ENCODE measurements at regions of chr11 and their contacts with region 1.

Region 1: GRCh38 chr11:47259178-47259977 is 1.6 kb downstream of the NR1H3 start:
- DNase-seq: peak in 1 of 2 experiments; percentile 85
- H3K4me3 ChIP-seq: no peak overlapping the region
- H3K27ac ChIP-seq: no peak overlapping the region
- H3K4me1 ChIP-seq: peaks cover 2 to 15% (median 9%) of the 10 kb centered on the region in 4 experiments
- H3K27me3 ChIP-seq: no peaks in the 10 kb centered on the region
- CTCF ChIP-seq: peak; percentile 70 to 80 (median 74)
- EP300 ChIP-seq: no peak
- POLR2A ChIP-seq: no peak
- RAD21 ChIP-seq: peak; percentile 72 to 79

Region 2: DNA sequence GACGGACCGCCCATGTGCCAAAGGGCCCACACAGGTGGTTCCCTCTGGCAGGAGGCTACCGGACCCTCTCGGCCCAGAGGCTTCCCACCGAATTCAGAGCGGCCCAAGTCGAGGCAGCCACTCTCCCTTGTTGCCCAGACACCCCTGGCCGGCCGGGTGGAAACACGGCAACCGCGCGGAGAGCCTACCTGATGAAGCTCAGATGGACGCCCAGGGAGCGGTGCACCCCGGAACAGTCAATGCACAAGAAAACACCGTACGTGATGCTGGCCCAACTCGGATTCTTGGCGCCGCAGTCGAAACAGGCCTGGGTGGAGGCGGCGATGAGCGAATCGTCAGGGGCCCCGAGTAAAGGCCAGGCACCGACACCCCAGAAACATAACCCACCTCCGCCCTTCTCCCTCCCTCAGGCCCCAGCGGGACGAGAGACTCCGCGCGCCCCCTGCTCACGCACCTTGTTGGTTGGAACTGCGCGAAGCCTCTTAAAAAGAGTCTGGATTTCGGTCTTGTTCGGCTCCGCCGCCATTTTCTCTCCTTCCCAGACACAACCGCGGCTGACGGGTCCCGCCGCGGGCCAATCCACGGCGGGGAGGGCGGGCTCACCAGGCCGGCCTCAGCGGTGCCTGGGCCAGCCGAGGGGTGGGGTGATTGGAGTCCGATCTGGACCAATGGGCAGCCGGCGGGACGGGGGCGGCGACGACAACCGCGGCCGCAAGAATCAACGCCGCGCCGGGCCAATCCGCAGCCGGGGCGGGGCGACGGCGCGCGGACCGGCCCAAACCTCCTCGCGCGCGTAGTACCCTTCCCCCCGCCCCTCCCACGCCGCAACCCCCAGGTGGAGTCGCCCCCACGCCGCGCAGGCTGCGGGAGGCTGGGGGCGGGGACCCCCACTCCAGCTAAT is 82.8 kb before region 1 on chr11 and contains the start of gene ARFGAP2:
- CTCF ChIA-PET with region 1: interaction called, 53 read pairs
- POLR2A ChIA-PET with region 1: interaction called, 35 read pairs
- DNase-seq: peak in 1 of 2 experiments; percentile 93
- H3K4me3 ChIP-seq: peak within 1 kb of the TSS; percentile 72 to 93 (median 90)
- H3K27ac ChIP-seq: peak within 1 kb of the TSS; percentile 93
- H3K4me1 ChIP-seq: peaks cover 0 to 8% (median 1%) of the 10 kb centered on the region in 4 experiments; a peak in 5 of 7 replicates
- H3K27me3 ChIP-seq: no peaks in the 10 kb centered on the region
- CTCF ChIP-seq: no peak
- EP300 ChIP-seq: 0 out of 3 replicates have a peak, but pooled peaks of 1 of the 2 experiments have one; percentile 16
- POLR2A ChIP-seq: peak in 1 of 2 experiments; percentile 78; a peak in 2 of 3 replicates
- RAD21 ChIP-seq: no peak
- total RNA-seq, gene ARFGAP2: 50.0 and 50.2 TPM in 2 replicates

Region 3: GRCh38 chr11:47213985-47214564 is 45.3 kb before region 1 on chr11:
- CTCF ChIA-PET with region 1: interaction called, 8 read pairs
- POLR2A ChIA-PET with region 1: interaction called, 13 read pairs
- DNase-seq: peak; percentile 69 to 88
- H3K4me3 ChIP-seq: peak overlapping the region; percentile 65 to 98 (median 75)
- H3K27ac ChIP-seq: peak overlapping the region; percentile 86
- H3K4me1 ChIP-seq: peaks cover 0 to 10% (median 8%) of the 10 kb centered on the region in 4 experiments; a peak in 6 of 7 replicates
- H3K27me3 ChIP-seq: no peaks in the 10 kb centered on the region
- CTCF ChIP-seq: no peak
- EP300 ChIP-seq: no peak
- POLR2A ChIP-seq: peak; percentile 75
- RAD21 ChIP-seq: no peak

Region 4: DNA sequence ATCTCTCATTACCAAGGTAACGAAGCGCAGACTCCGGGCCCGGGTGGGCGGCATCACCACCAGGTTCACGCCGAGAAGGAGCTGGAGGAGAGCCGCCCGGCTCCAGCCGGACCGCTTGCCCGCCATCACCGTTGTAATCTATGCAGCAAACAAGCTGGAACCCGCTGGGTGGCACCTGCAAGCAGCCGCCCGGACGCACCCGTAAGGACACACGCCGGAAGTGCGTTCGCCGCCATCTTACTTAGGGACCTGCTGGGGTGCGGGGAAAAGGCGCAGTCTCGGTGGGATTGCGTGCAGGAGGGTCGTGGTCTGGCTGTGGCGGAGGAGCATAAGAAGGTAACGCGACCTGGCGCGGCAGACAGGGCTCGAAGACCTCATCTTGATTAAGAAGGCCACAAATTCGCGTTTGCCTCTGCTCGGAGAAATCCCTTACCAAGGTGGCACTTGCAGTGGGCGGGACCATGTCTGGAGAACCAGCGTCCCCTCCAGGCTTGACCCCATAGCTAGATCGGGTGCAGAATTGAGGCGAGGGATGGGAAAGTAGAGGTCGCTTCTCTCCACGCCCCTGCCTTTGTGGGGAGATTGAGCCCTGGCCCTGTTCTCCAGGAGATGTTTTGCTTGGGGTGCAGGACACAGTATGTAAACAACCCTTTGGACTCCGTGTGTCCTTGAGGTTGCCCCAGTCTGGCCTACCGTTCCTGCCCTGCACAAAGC is 10.6 kb before region 1 on chr11 and contains the start of gene ACP2:
- CTCF ChIA-PET with region 1: interaction called, 127 read pairs
- POLR2A ChIA-PET with region 1: interaction called, 47 read pairs
- DNase-seq: peak in 1 of 2 experiments; percentile 93
- H3K4me3 ChIP-seq: peak within 1 kb of the TSS; percentile 42 to 97 (median 93)
- H3K27ac ChIP-seq: peak within 1 kb of the TSS; percentile 96
- H3K4me1 ChIP-seq: peaks cover 0 to 9% (median 0%) of the 10 kb centered on the region in 4 experiments; a peak in 4 of 7 replicates
- H3K27me3 ChIP-seq: no peaks in the 10 kb centered on the region
- CTCF ChIP-seq: peak; percentile 0 to 51 (median 42); a peak in 3 of 4 replicates
- EP300 ChIP-seq: peak in 1 of 2 experiments; percentile 76; a peak in 1 of 3 replicates
- POLR2A ChIP-seq: peak; percentile 61 to 96
- RAD21 ChIP-seq: peak; percentile 8 to 12; a peak in 2 of 4 replicates
- total RNA-seq, gene ACP2: 17.8 and 18.9 TPM in 2 replicates

Region 5: GRCh38 chr11:47305734-47306483 is 46.5 kb after region 1 on chr11:
- CTCF ChIA-PET with region 1: interaction called, 10 read pairs
- POLR2A ChIA-PET with region 1: interaction called, 3 read pairs
- DNase-seq: no peak
- H3K4me3 ChIP-seq: no peak overlapping the region
- H3K27ac ChIP-seq: no peak overlapping the region
- H3K4me1 ChIP-seq: no peaks in the 10 kb centered on the region
- H3K27me3 ChIP-seq: no peaks in the 10 kb centered on the region
- CTCF ChIP-seq: no peak
- EP300 ChIP-seq: no peak
- POLR2A ChIP-seq: no peak
- RAD21 ChIP-seq: no peak

Region 6: DNA sequence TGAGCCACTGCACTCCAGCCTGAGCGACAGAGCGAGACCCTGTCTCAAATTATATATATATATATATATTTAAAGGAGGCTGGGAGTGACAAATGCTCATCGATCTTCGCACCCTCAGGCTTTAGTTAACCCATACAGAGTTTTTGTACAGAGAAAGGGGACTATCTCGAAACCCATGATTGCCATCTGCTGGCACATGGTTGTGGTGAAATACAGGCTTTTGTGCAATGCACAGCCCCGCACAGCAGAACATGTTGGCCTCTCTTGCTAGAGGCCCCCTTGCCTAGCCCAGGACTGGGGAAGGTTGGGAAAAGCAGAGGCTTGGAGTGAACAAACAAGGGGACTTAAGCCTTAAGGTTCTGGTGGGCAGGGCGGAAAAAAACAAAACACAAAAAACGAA is 89.5 kb after region 1 on chr11:
- CTCF ChIA-PET with region 1: interaction called, 35 read pairs
- POLR2A ChIA-PET with region 1: interaction called, 3 read pairs
- DNase-seq: no peak
- H3K4me3 ChIP-seq: no peak overlapping the region
- H3K27ac ChIP-seq: no peak overlapping the region
- H3K4me1 ChIP-seq: peaks cover 0 to 12% (median 5%) of the 10 kb centered on the region in 4 experiments; a peak in 6 of 7 replicates
- H3K27me3 ChIP-seq: no peaks in the 10 kb centered on the region
- CTCF ChIP-seq: peak in 2 of 3 experiments; percentile 26 to 37; a peak in 3 of 4 replicates
- EP300 ChIP-seq: no peak
- POLR2A ChIP-seq: no peak
- RAD21 ChIP-seq: peak; percentile 40 to 54; a peak in 3 of 4 replicates

Region 7: GRCh38 chr11:47443042-47443700 is 183.8 kb after region 1 on chr11:
- CTCF ChIA-PET with region 1: no interaction called
- POLR2A ChIA-PET with region 1: no interaction called
- DNase-seq: no peak
- H3K4me3 ChIP-seq: no peak overlapping the region
- H3K27ac ChIP-seq: no peak overlapping the region
- H3K4me1 ChIP-seq: no peaks in the 10 kb centered on the region
- H3K27me3 ChIP-seq: no peaks in the 10 kb centered on the region
- CTCF ChIP-seq: peak; percentile 33 to 60 (median 45)
- EP300 ChIP-seq: no peak
- POLR2A ChIP-seq: no peak
- RAD21 ChIP-seq: peak in 1 of 2 experiments; percentile 15; a peak in 1 of 4 replicates